ENCODE measurements at regions of chrX and their contacts with region 1.

Region 1: GRCh38 chrX:53683556-53684414 is 2.7 kb downstream of the HUWE1 start:
- DNase-seq: peak; percentile 99
- H3K4me3 ChIP-seq: peak overlapping the region; percentile 79 to 98 (median 92)
- H3K27ac ChIP-seq: peak overlapping the region; percentile 88
- H3K4me1 ChIP-seq: peaks cover 23% of the 10 kb centered on the region
- H3K27me3 ChIP-seq: no peaks in the 10 kb centered on the region
- CTCF ChIP-seq: no peak
- POLR2A ChIP-seq: no peak

Region 2: GRCh38 chrX:53422086-53422860 is 261.5 kb before region 1 on chrX and contains the start of gene SMC1A:
- CTCF ChIA-PET with region 1: no interaction called
- POLR2A ChIA-PET with region 1: no interaction called
- dilution Hi-C with region 1: no loop called
- intact Hi-C with region 1: loop called (anchors 5 kb)
- DNase-seq: peak; percentile 96
- H3K4me3 ChIP-seq: peak within 1 kb of the TSS; percentile 66 to 81 (median 80)
- H3K27ac ChIP-seq: peak within 1 kb of the TSS; percentile 88
- H3K4me1 ChIP-seq: peaks cover 12% of the 10 kb centered on the region
- H3K27me3 ChIP-seq: no peaks in the 10 kb centered on the region
- CTCF ChIP-seq: no peak
- POLR2A ChIP-seq: peak; percentile 83
- total RNA-seq, gene SMC1A: 72.5 and 75.9 TPM in 2 replicates

Region 3: GRCh38 chrX:53538781-53539180 is 145.0 kb before region 1 on chrX:
- CTCF ChIA-PET with region 1: no interaction called
- POLR2A ChIA-PET with region 1: no interaction called
- dilution Hi-C with region 1: no loop called
- intact Hi-C with region 1: no loop called
- DNase-seq: no peak
- H3K4me3 ChIP-seq: no peak overlapping the region
- H3K27ac ChIP-seq: no peak overlapping the region
- H3K4me1 ChIP-seq: no peaks in the 10 kb centered on the region
- H3K27me3 ChIP-seq: no peaks in the 10 kb centered on the region
- CTCF ChIP-seq: no peak
- POLR2A ChIP-seq: no peak

Region 4: DNA sequence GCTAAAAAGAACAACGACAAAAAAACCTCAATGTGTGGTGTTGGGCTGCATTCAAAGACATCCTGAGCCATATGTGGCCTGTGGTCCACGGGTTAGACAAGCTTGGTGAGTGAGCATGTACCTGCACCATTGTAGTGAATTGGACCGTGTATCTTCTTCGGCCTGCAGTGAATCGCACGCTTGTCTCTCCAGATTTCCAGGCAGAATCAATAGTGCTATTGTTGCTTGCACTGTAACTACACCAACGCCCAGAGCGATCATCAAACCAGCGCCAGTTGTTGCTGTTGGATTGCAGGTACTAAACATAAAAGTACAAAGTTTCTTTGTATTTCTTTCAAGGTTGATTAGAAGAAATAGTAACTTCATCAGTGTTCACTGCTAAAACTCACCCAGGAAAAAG is 98.9 kb before region 1 on chrX:
- CTCF ChIA-PET with region 1: no interaction called
- POLR2A ChIA-PET with region 1: no interaction called
- dilution Hi-C with region 1: no loop called
- intact Hi-C with region 1: no loop called
- DNase-seq: no peak
- H3K4me3 ChIP-seq: no peak overlapping the region
- H3K27ac ChIP-seq: no peak overlapping the region
- H3K4me1 ChIP-seq: no peaks in the 10 kb centered on the region
- H3K27me3 ChIP-seq: no peaks in the 10 kb centered on the region
- CTCF ChIP-seq: no peak
- POLR2A ChIP-seq: no peak

Region 5: DNA sequence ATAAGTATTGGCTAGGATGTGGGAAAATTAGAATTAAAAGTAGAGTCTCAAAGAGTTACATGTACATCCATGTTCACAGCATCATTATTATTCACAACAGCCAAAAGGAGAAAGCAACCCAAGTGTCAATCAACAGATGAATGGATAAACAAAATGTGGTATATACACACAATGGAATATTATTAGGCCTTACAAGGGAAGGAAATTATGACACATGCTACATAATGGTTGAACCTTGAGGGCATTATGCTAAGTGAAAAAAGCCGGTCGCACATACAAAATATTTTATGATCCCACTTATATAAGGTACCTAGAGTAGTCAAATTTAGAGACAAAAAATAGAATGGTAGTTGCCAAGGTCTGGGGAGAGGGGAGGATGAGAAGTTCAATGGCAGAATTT is 77.3 kb before region 1 on chrX:
- CTCF ChIA-PET with region 1: no interaction called
- POLR2A ChIA-PET with region 1: interaction called, 11 read pairs
- dilution Hi-C with region 1: no loop called
- intact Hi-C with region 1: no loop called
- DNase-seq: peak; percentile 54
- H3K4me3 ChIP-seq: no peak overlapping the region
- H3K27ac ChIP-seq: peak overlapping the region; percentile 22
- H3K4me1 ChIP-seq: peaks cover 32% of the 10 kb centered on the region
- H3K27me3 ChIP-seq: no peaks in the 10 kb centered on the region
- CTCF ChIP-seq: no peak
- POLR2A ChIP-seq: no peak

Region 6: GRCh38 chrX:53694642-53695041 is 10.9 kb after region 1 on chrX:
- CTCF ChIA-PET with region 1: no interaction called
- POLR2A ChIA-PET with region 1: no interaction called
- dilution Hi-C with region 1: no loop called
- intact Hi-C with region 1: no loop called
- DNase-seq: no peak
- H3K4me3 ChIP-seq: no peak overlapping the region
- H3K27ac ChIP-seq: no peak overlapping the region
- H3K4me1 ChIP-seq: no peaks in the 10 kb centered on the region
- H3K27me3 ChIP-seq: no peaks in the 10 kb centered on the region
- CTCF ChIP-seq: no peak
- POLR2A ChIP-seq: no peak

Region 7: GRCh38 chrX:53831662-53832635 is 148.2 kb after region 1 on chrX:
- CTCF ChIA-PET with region 1: interaction called, 3 read pairs
- POLR2A ChIA-PET with region 1: no interaction called
- dilution Hi-C with region 1: no loop called
- intact Hi-C with region 1: loop called (anchors 1 kb)
- DNase-seq: peak; percentile 44
- H3K4me3 ChIP-seq: no peak overlapping the region
- H3K27ac ChIP-seq: no peak overlapping the region
- H3K4me1 ChIP-seq: no peaks in the 10 kb centered on the region
- H3K27me3 ChIP-seq: no peaks in the 10 kb centered on the region
- CTCF ChIP-seq: peak; percentile 17 to 26
- POLR2A ChIP-seq: no peak

Region 8: GRCh38 chrX:54044126-54044876 is 360.5 kb after region 1 on chrX and contains the start of gene PHF8:
- CTCF ChIA-PET with region 1: no interaction called
- POLR2A ChIA-PET with region 1: interaction called, 3 read pairs
- dilution Hi-C with region 1: no loop called
- intact Hi-C with region 1: loop called (anchors 1 kb)
- DNase-seq: peak; percentile 95
- H3K4me3 ChIP-seq: peak within 1 kb of the TSS; percentile 66 to 87 (median 70)
- H3K27ac ChIP-seq: peak within 1 kb of the TSS; percentile 81
- H3K4me1 ChIP-seq: peaks cover 13% of the 10 kb centered on the region
- H3K27me3 ChIP-seq: no peaks in the 10 kb centered on the region
- CTCF ChIP-seq: no peak
- POLR2A ChIP-seq: peak; percentile 70
- total RNA-seq, gene PHF8: 23.2 and 25.5 TPM in 2 replicates

Region 9: DNA sequence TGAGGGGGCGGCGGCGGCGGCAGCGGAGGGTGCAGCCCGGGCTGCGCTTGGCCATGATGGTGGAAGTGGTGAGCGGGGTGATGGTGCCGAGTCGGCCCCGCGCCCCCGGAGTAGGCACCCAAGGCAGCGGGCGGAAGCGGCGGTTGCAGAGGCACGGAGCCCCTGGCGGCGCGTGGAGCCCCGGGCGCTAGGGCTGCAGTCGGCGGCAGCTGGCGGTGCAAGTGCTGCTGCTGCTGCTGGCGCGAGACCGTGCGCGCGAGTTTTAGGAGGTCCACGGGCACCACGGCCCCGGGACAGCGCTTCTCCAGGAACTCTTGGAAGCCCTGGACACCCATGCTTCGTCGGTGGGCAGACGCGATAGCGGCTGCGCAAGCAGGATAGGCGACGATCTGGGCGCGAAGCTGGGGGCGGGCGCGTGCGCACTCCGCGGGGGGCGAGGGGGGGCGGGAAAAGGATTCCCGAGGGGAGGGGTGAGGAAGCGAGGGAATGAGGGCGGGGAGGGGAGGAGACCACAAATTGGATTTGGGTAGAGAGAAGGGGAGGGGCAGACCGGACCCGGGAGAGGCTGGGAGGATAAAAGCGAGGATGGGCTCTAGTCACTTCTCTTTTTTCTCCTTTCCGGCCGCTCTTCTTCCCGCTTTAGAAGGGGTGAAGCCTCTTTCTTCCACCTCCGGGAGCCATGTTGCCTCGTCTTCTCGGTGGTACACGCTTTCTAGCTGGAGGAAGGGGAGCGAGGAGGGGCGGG is 499.3 kb after region 1 on chrX and contains the start of gene FAM120C:
- CTCF ChIA-PET with region 1: no interaction called
- POLR2A ChIA-PET with region 1: interaction called, 8 read pairs
- dilution Hi-C with region 1: no loop called
- intact Hi-C with region 1: loop called (anchors 10 kb)
- DNase-seq: peak; percentile 76
- H3K4me3 ChIP-seq: peak within 1 kb of the TSS; percentile 55 to 81 (median 81)
- H3K27ac ChIP-seq: peak within 1 kb of the TSS; percentile 72
- H3K4me1 ChIP-seq: peaks cover 35% of the 10 kb centered on the region
- H3K27me3 ChIP-seq: no peaks in the 10 kb centered on the region
- CTCF ChIP-seq: no peak
- POLR2A ChIP-seq: peak; percentile 55
- total RNA-seq, gene FAM120C: 10.1 and 11.4 TPM in 2 replicates

Region 10: DNA sequence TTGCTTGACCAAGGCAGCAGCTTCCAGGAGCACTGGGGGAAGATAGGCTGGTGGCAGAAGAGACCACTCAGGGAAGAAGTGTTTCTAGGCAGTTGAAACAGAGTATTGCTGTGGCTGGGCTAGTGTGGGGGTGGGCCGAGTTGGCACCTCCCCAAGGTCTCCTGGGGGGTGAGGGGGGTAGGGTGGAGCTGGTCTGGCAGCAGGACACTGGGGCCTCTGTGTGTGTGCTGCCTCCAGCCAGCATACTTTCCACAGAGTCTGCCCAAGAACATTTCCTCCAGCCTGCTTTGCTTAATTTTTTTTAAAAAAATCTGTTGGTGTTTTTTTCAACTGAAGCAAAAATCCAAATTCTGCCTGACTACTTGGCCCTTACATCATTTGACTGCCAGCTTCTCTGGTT is 1110.2 kb after region 1 on chrX:
- CTCF ChIA-PET with region 1: no interaction called
- POLR2A ChIA-PET with region 1: no interaction called
- dilution Hi-C with region 1: no loop called
- intact Hi-C with region 1: no loop called
- DNase-seq: no peak
- H3K4me3 ChIP-seq: no peak overlapping the region
- H3K27ac ChIP-seq: no peak overlapping the region
- H3K4me1 ChIP-seq: no peaks in the 10 kb centered on the region
- H3K27me3 ChIP-seq: peaks cover 0 to 11% of the 10 kb centered on the region in 2 experiments
- CTCF ChIP-seq: no peak
- POLR2A ChIP-seq: no peak

Measured in endothelial cell of umbilical vein (primary cell).